HEK293T (cell line): ENCODE measurements at regions of chr2 and their contacts with region 1.

Region 1: GRCh38 chr2:73212448-73213176 is 1.4 kb upstream of the SMYD5 start:
- DNase-seq: peak; percentile 82

Region 2: DNA sequence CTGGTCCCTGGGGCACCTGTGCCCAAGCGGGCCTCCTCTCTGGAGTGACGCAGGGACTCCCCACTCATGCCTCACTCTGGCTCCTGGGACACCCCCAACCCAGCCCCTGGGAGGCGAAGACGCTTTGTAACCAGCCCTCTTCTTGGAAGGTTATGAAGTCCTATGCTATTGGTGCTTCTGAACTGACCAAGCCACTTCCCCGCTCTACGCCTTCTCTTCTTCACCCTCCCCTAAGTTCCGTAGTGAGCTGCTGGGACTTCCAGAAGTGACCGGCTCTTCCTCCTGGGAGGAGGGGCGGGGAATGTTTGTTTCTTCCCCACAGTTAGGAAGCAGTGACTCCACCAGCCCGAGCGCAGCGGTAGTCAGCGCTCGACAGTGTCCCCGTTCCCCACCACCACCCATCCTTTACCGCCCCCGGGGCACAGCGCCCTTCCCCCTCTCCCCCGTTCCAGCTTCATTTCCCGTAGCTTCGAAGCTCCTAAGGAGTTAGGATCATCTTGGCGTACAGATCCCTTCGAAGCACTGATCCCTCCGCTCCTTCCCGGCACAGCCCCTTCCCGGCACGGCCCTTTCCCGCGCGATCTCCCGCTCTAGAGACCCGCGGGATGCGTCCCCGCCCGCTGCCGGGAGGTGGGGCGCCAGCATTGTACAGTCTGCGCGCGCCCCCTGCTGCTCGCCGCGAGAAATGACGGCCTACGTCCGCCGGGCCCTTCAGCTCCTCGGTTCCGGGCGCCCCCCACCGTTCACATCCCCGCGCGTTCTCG is 35.5 kb before region 1 on chr2:
- CTCF ChIA-PET with region 1: interaction called, 13 read pairs
- POLR2A ChIA-PET with region 1: interaction called, 7 read pairs
- DNase-seq: peak; percentile 94